CD8-positive, alpha-beta T cell (primary cell): ENCODE measurements at regions of chr1 and their contacts with region 1.

Region 1: DNA sequence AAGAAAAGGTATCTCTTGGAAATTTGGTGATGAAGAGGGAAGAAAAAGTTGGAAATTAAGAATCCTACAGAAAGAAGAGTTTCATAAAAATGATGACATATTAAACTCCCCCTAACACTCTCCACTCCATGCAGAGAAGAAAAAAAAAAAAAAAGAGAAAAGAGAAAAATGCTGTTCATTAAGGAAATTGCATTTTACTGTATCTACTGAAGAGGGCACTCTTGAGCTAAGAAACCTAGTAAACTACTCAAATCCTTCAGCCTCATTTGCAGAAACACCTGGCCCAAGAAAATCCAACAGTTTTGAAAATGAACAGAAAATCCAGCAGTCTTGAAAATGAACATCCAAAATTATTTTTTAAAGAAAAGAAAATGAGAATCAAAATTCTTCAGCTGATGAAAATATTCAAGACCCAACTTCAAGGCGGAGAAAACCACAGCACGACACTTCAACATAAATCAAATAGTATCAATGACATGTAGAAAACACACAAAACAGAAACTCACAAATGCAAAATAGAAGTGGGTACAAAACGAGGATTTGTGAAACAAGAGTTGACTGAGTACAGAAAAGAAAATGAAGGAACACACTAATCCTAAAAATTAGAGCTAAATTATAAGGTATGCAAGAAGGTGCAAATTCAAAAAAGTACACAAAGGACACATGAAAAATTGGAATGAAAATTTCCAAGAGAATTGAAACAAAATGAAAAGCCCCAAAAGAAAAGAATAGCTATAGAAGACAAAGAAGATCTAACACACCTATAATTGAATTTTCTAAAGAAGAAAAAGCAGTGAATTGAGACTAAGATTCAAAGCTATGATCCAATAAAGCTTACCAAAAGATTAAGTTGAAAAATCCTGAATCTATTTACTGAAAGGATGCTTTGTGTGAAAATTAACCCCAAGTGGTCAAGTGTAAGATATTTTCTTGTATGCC is 73.2 kb upstream of the DNAJC6 start:
- DNase-seq: peak in 2 of 9 experiments; percentile 53 to 56
- ATAC-seq: no peak
- H3K4me3 ChIP-seq: no peak overlapping the region
- H3K4me3 Mint-ChIP-seq: no peak overlapping the region
- H3K27ac ChIP-seq: no peak overlapping the region
- H3K27ac Mint-ChIP-seq: no peak overlapping the region
- H3K4me1 ChIP-seq: no peaks in the 10 kb centered on the region
- H3K4me1 Mint-ChIP-seq: no peaks in the 10 kb centered on the region
- H3K27me3 ChIP-seq: no peaks in the 10 kb centered on the region
- H3K27me3 Mint-ChIP-seq: peaks cover 21% of the 10 kb centered on the region
- CTCF ChIP-seq: peak; percentile 33

Region 2: GRCh38 chr1:65393347-65393746 is 157.2 kb after region 1 on chr1:
- CTCF ChIA-PET with region 1: no interaction called
- POLR2A ChIA-PET with region 1: no interaction called
- intact Hi-C with region 1: loop called in 1 of 2 experiments (anchors 10 kb)
- DNase-seq: no peak
- ATAC-seq: no peak
- H3K4me3 ChIP-seq: no peak overlapping the region
- H3K4me3 Mint-ChIP-seq: no peak overlapping the region
- H3K27ac ChIP-seq: no peak overlapping the region
- H3K27ac Mint-ChIP-seq: no peak overlapping the region
- H3K4me1 ChIP-seq: no peaks in the 10 kb centered on the region
- H3K4me1 Mint-ChIP-seq: no peaks in the 10 kb centered on the region
- H3K27me3 ChIP-seq: no peaks in the 10 kb centered on the region
- H3K27me3 Mint-ChIP-seq: no peaks in the 10 kb centered on the region
- CTCF ChIP-seq: no peak